MCF 10A (cell line): ENCODE measurements at regions of chr10 and their contacts with region 1.

Region 1: DNA sequence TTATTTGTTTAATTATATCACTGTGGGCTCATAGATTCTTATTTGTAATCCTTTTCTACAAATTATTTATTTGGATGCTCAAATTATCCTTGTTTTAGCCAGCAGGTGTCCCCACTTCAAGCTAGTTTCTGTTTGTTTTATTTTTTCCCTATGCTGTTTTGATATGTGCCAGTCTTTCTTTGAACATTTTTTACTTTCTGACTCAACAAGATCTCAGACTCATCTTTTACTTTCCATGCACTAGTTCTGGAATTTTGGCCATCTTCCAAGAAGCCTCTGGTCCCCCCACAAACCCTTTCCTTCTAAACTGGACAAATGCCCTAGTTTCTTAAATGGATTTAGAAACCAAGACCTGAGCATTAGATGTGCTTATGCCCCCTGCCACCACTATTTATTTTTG is 11.5 kb upstream of the MRPS16 start:
- DNase-seq: peak; percentile 38
- H3K4me3 Mint-ChIP-seq: no peak overlapping the region
- H3K27ac Mint-ChIP-seq: peak overlapping the region; percentile 68
- H3K4me1 Mint-ChIP-seq: peaks cover 16% of the 10 kb centered on the region
- H3K27me3 Mint-ChIP-seq: no peaks in the 10 kb centered on the region
- CTCF ChIP-seq: peak; percentile 41

Region 2: GRCh38 chr10:73136627-73137026 is 127.3 kb before region 1 on chr10:
- CTCF ChIA-PET with region 1: no interaction called
- POLR2A ChIA-PET with region 1: no interaction called
- intact Hi-C with region 1: no loop called
- DNase-seq: no peak
- H3K4me3 Mint-ChIP-seq: no peak overlapping the region
- H3K27ac Mint-ChIP-seq: no peak overlapping the region
- H3K4me1 Mint-ChIP-seq: peaks cover 6% of the 10 kb centered on the region
- H3K27me3 Mint-ChIP-seq: no peaks in the 10 kb centered on the region
- CTCF ChIP-seq: no peak

Region 3: GRCh38 chr10:73246783-73247508 is 17.0 kb before region 1 on chr10 and contains the start of gene DNAJC9:
- CTCF ChIA-PET with region 1: interaction called, 4 read pairs
- POLR2A ChIA-PET with region 1: interaction called, 64 read pairs
- intact Hi-C with region 1: no loop called
- DNase-seq: peak; percentile 96
- H3K4me3 Mint-ChIP-seq: peak within 1 kb of the TSS; percentile 91
- H3K27ac Mint-ChIP-seq: peak within 1 kb of the TSS; percentile 95
- H3K4me1 Mint-ChIP-seq: peaks cover 30% of the 10 kb centered on the region
- H3K27me3 Mint-ChIP-seq: no peaks in the 10 kb centered on the region
- CTCF ChIP-seq: peak; percentile 6
- total RNA-seq, gene DNAJC9: 33.1 and 35.1 TPM in 2 replicates

Region 4: DNA sequence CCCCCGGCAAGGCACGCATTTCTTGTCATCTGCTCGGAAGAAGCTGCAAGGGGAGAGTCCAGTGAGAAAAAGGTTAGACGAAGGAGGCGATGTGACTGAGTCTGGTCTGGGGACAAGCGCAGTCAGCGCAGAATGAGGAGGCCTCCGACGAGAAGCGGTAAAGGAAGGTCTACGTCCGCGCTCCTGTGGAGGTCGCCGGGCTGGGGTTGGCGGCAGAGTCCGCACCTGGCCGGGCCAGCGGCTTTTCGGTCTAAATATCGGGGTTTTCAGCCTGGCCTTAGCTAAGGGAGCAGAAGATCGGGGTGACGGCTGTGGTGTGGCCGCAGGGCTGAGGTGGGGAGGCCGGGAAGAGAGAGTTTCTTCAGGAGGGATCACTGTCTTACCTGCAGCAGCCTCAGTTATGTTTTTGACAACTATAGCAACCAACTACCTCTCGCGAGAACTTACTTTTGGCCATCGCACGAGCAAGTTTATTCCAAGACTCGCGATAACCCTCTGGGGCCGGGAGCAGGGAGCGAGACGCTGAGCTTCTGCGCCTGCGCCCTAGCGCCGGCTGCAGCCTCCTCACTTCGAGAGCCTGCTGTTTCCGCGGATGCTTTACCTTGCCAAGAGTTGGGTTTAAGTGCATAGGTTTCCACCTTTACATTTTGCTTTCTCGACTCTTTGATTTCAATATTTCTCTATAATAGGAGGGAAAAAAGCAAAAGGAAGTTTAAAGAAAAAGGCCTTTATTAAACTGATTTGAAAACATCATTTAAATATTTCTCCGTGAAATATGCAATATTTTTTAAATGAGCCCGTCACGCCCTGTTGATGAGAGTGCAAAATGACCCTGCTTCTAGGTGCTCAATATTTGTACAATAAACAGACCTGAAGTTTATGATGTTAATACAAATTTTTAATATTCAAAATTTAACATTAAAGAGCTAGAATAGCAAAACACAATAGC is 94.7 kb after region 1 on chr10 and contains the start of gene CFAP70:
- CTCF ChIA-PET with region 1: interaction called, 4 read pairs
- POLR2A ChIA-PET with region 1: interaction called, 12 read pairs
- intact Hi-C with region 1: loop called (anchors 1 kb)
- DNase-seq: peak; percentile 88
- H3K4me3 Mint-ChIP-seq: peak within 1 kb of the TSS; percentile 96
- H3K27ac Mint-ChIP-seq: peak within 1 kb of the TSS; percentile 98
- H3K4me1 Mint-ChIP-seq: peaks cover 11% of the 10 kb centered on the region
- H3K27me3 Mint-ChIP-seq: no peaks in the 10 kb centered on the region
- CTCF ChIP-seq: no peak
- total RNA-seq, gene CFAP70: 1.5 and 2.9 TPM in 2 replicates

Region 5: DNA sequence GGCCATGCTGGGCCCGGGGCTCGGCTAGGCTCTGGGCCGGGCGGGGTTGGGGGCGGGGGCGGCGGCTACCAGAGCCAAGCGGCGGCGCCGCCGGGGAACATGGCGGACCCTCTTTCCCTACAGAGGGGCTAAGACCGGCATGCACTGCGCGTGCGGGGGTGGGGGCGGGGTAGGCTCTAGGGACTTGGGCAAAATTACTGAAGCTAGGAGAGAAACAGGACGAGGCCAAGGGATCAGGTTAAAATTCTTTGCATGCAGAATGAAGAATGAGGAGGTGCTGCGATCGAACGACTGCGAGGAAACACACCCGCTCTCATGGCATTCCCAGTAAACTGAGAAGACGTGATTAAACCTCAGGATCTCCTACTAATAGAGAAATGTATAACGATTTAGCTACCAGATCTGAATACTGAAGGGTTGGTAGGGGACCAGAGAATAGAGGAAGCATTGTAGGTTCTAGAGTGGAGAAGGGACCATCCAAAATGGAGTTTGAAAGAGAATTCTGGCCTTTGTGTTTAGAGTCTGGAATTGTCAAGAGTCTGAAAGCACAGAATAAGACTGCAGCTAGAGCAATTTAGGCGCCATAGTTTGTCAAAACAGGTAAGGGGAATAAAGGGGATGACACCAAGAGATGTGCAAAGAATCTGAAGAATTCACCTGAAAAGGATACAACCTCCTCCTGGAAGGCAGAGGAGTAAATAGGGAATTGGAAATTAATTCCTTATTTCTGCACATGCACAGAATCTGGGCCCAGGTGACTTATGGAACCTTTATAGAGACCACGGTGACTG is 232.1 kb after region 1 on chr10 and contains the start of gene PPP3CB:
- CTCF ChIA-PET with region 1: no interaction called
- POLR2A ChIA-PET with region 1: no interaction called
- intact Hi-C with region 1: loop called (anchors 5 kb)
- DNase-seq: peak; percentile 95
- H3K4me3 Mint-ChIP-seq: peak within 1 kb of the TSS; percentile 86
- H3K27ac Mint-ChIP-seq: peak within 1 kb of the TSS; percentile 74
- H3K4me1 Mint-ChIP-seq: peaks cover 28% of the 10 kb centered on the region
- H3K27me3 Mint-ChIP-seq: no peaks in the 10 kb centered on the region
- CTCF ChIP-seq: no peak
- total RNA-seq, gene PPP3CB: 34.8 and 37.4 TPM in 2 replicates

Region 6: GRCh38 chr10:73644015-73644743 is 380.2 kb after region 1 on chr10:
- CTCF ChIA-PET with region 1: interaction called, 6 read pairs
- POLR2A ChIA-PET with region 1: no interaction called
- intact Hi-C with region 1: loop called (anchors 1 kb)
- DNase-seq: peak; percentile 75
- H3K4me3 Mint-ChIP-seq: no peak overlapping the region
- H3K27ac Mint-ChIP-seq: no peak overlapping the region
- H3K4me1 Mint-ChIP-seq: peaks cover 7% of the 10 kb centered on the region
- H3K27me3 Mint-ChIP-seq: no peaks in the 10 kb centered on the region
- CTCF ChIP-seq: peak; percentile 85